Right ventricle myocardium inferior (tissue), 1 donor: ENCODE measurements at regions of chr12 and their contacts with region 1.

Region 1: DNA sequence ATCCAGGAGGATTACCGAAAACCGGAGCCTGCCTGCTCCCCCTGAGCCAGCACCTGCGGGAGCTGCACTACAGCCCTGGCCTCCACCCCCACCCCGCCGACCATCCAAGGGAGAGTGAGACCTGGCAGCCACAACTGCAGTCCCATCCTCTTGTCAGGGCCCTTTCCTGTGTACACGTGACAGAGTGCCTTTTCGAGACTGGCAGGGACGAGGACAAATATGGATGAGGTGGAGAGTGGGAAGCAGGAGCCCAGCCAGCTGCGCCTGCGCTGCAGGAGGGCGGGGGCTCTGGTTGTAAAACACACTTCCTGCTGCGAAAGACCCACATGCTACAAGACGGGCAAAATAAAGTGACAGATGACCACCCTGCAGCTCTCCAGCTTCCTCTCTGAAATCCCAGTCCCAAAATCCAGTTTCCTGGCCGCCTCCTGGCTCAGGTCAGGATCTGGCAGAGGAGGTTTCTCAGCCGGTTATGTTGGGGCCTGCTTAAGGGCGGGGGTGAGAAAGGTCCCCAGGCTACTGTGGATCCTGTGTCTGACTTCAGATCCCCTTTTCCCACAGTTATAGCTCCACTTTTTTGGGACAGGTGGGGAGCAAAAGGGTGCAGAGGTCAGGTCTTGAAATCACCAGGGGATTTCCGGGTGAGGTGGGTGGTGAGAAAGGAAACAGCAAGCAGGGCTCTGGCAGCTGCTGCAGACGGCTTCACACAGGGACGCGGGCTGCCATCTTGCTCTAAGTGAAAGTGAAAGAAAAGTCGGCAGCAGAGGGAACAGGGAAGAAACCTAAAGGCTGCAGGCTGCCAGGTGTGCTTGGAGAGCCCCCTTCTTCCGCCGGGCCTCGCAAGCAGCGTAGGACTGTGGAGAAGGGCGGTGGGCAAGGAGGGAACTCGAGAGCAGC is at the start of gene TAPBPL:
- DNase-seq: peak; percentile 91
- ATAC-seq: peak; percentile 95
- total RNA-seq, gene TAPBPL: 15.7 TPM

Region 2: DNA sequence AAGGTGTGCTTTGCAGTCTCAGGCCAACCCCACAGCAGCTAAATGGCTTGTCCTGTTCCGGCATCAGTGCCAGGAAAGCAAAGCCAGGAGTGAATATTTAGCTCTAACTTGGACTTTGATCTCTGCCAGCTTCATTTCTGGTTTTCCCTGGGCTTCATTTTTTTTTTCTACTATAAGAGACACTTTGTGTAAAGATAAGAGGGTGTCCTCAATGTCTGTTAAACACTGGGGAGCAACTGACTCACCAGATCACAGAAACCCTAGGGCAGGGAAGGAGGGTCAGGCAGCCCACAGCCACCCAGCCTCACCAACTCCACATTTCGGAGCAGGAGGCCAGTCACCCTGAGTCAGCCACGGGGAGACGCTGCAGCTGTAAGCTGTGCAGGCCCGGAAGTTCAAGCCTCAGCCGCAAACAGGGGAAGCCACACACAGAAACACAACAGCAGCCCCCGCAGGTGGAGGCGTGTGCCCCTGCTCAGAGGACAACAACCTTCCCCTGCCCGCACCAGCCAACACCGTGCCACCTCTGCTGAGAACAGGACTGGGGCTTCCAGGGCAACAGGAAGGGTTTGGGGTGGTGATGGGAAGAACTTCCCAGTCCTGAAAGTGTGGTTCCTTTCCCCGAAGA is 116.0 kb before region 1 on chr12:
- intact Hi-C with region 1: loop called (anchors 5 kb)
- DNase-seq: peak; percentile 87
- ATAC-seq: peak; percentile 30

Region 3: DNA sequence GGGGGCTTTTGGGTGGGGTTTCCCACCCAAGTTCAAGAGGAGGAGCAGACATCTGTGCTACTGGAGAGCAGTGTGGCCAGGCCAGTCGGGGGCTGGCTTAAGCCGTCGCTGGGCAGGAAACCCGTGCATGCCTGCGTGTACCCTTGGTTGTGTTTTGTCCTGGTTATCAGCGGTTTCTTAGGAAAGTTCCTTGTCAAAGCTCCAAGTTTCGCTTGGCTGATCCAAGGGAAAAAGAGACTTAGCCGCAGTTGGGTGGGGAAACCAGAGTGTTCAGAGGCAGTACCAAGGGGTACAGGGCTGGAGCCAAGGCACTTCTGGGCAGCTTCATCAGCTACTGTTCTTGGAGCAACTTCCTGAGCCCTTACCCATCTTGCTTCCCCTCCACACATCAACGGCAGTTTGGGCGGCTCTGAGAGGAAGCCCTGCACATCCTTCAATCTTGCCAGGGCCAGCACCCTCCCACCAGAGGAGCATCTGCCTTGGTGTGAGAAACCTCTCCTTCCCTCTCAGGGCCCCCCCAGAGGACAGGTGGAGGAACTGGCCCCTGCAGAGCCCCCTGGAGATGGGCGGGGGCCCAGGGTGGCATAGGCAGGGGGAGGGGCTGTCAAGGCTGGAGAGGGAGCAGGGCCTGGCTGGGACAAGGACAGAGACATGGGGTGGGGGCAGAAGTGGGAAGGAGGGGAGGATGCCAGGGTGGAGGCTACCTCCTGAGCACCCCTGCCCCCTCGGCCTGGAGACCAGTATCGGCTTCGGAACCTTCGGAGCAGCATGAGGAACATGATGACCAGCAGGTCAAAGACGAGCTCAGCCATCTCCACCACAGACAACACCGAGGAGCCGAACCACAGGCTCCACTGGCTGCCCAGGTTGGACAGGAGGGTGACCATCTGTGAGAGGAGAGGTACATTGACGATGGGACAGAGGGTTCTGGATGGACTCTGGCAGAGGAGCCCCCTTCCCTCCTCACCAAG is 103.9 kb before region 1 on chr12:
- intact Hi-C with region 1: no loop called
- DNase-seq: peak; percentile 81
- ATAC-seq: peak; percentile 79